ENCODE measurements at regions of chr12 and their contacts with region 1.

Region 1: DNA sequence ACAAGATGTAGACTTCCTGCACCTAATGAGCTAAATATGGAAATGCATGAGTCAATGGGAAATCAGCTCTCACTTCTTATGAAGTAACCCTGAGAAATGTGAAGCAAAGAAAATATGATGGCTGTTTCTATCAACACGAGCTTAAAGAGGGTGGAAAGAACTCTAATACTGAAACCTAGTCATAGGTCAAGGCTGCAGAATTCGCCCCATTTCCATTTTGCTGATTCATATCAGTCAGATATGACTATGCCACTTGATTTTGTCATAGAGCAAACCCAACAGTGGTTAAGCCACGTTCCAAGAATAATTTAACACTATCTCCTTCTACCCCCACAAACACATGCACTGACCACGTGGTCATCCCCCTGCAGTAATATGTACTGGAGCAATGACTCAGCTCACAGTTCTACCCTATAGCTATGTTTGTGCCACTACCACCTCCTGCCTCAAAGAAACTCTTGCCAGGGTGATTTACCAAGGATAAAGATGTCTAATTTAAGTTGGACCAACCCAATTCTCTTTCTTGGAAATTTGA is 157.5 kb downstream of the TMTC3 start:
- DNase-seq: peak; percentile 29
- H3K4me3 Mint-ChIP-seq: no peak overlapping the region
- H3K27ac Mint-ChIP-seq: peak overlapping the region; percentile 76
- H3K4me1 Mint-ChIP-seq: peaks cover 35% of the 10 kb centered on the region
- H3K27me3 Mint-ChIP-seq: no peaks in the 10 kb centered on the region

Region 2: DNA sequence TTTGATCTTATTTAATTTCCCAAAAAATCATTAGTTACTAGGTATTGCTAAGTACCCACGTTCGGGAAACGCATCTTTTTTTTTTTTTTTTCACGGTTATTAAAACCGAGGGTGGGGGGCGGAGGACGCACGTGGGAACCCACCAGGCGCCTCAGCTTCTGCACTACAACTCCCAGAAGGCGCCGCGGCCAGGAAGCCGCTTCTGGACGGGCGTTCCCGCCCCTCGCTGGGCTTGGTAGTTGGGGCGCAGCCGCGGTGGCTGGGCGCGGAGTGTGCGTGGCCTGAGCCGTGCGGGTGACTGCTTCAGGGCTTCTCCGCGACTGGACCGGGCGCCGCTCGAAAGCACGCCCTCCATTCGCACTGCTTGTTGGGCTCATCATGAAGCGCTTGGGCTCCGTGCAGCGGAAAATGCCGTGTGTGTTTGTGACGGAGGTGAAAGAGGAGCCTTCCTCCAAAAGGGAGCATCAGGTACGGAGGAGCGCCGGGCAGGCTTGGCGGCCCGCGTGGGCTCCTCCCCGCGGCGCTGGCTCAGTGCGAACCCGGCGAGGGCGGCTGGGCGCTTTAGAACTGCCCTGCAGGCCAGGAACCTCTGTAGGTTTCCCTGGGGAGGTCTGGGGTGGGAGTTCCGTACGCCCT is 264.2 kb before region 1 on chr12:
- intact Hi-C with region 1: loop called (anchors 2 kb)
- DNase-seq: peak; percentile 84
- H3K4me3 Mint-ChIP-seq: peak overlapping the region; percentile 98
- H3K27ac Mint-ChIP-seq: peak overlapping the region; percentile 96
- H3K4me1 Mint-ChIP-seq: peaks cover 55% of the 10 kb centered on the region
- H3K27me3 Mint-ChIP-seq: no peaks in the 10 kb centered on the region

Region 3: DNA sequence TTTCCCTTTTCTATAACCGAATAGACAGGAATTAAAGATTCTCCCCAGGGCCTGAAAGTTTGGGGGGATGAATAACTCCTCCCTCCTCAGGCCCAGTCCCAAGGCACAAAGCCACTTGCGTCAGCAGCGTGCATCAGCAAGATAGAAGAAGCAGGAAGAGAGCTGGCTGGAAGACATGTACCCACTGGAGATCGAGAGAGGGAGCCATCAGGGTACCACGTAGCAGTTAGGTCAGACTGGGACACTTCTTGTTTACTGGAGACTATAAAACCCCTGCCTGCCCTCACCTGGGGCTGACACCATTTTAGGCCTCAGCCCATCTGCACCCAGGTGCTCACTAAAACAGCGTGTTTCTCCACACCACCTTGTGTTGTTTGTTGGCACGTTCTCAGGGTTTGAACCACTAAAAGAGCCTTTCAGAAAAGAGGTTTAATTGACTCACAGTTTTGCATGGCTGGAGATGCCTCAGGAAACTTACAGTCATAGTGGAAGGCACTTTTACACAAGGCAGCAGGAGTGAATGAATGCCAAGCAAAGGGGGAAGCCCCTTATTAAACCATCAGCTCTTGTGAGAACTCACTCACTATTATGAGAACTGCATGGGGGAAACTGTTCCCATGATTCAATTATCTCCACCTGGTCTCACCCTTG is 64.3 kb before region 1 on chr12:
- intact Hi-C with region 1: loop called (anchors 1 kb)
- DNase-seq: no peak
- H3K4me3 Mint-ChIP-seq: no peak overlapping the region
- H3K27ac Mint-ChIP-seq: peak overlapping the region; percentile 45
- H3K4me1 Mint-ChIP-seq: peaks cover 9% of the 10 kb centered on the region
- H3K27me3 Mint-ChIP-seq: no peaks in the 10 kb centered on the region

Region 4: GRCh38 chr12:88310069-88310468 is 10.4 kb after region 1 on chr12:
- intact Hi-C with region 1: no loop called
- DNase-seq: no peak
- H3K4me3 Mint-ChIP-seq: no peak overlapping the region
- H3K27ac Mint-ChIP-seq: no peak overlapping the region
- H3K4me1 Mint-ChIP-seq: peaks cover 12% of the 10 kb centered on the region
- H3K27me3 Mint-ChIP-seq: no peaks in the 10 kb centered on the region

Region 5: GRCh38 chr12:88393017-88393767 is 93.6 kb after region 1 on chr12:
- intact Hi-C with region 1: loop called (anchors 1 kb)
- DNase-seq: no peak
- H3K4me3 Mint-ChIP-seq: no peak overlapping the region
- H3K27ac Mint-ChIP-seq: no peak overlapping the region
- H3K4me1 Mint-ChIP-seq: peaks cover 14% of the 10 kb centered on the region
- H3K27me3 Mint-ChIP-seq: peaks cover 6% of the 10 kb centered on the region

Region 6: GRCh38 chr12:89494411-89495231 is 1195.0 kb after region 1 on chr12:
- intact Hi-C with region 1: loop called (anchors 10 kb)
- DNase-seq: peak; percentile 16
- H3K4me3 Mint-ChIP-seq: peak overlapping the region; percentile 50
- H3K27ac Mint-ChIP-seq: peak overlapping the region; percentile 92
- H3K4me1 Mint-ChIP-seq: peaks cover 34% of the 10 kb centered on the region
- H3K27me3 Mint-ChIP-seq: no peaks in the 10 kb centered on the region

Region 7: GRCh38 chr12:90102957-90103652 is 1803.5 kb after region 1 on chr12:
- intact Hi-C with region 1: loop called (anchors 5 kb)
- DNase-seq: no peak
- H3K4me3 Mint-ChIP-seq: no peak overlapping the region
- H3K27ac Mint-ChIP-seq: no peak overlapping the region
- H3K4me1 Mint-ChIP-seq: peaks cover 6% of the 10 kb centered on the region
- H3K27me3 Mint-ChIP-seq: peaks cover 2% of the 10 kb centered on the region

Measured in activated T-helper 1 cell treated with anti-CD3 and anti-CD28 coated beads, Interleukin-12 subunit alpha, Interleukin-12 subunit beta, Interleukin-2, Interleukin-4 antibody, amounts not matched to agents 30 ng/mL and 10 ng/mL and 1 ng/mL, durations not matched to agents 14 hours and 24 hours and 36 hours (primary cell).